Activated T-helper 1 cell treated with anti-CD3 and anti-CD28 coated beads, Interleukin-12 subunit alpha, Interleukin-12 subunit beta, Interleukin-2, Interleukin-4 antibody, amounts not matched to agents 30 ng/mL and 10 ng/mL and 1 ng/mL, durations not matched to agents 14 hours and 24 hours and 36 hours (primary cell): ENCODE measurements at regions of chr1 and their contacts with region 1.

Region 1: GRCh38 chr1:27891196-27891889 is 19.0 kb downstream of the THEMIS2 start:
- DNase-seq: peak; percentile 62
- H3K4me3 Mint-ChIP-seq: peak overlapping the region; percentile 63
- H3K27ac Mint-ChIP-seq: peak overlapping the region; percentile 95
- H3K4me1 Mint-ChIP-seq: peaks cover 66% of the 10 kb centered on the region
- H3K27me3 Mint-ChIP-seq: no peaks in the 10 kb centered on the region

Region 2: GRCh38 chr1:27671964-27672749 is 219.2 kb before region 1 on chr1 and contains the start of gene IFI6:
- intact Hi-C with region 1: loop called (anchors 1 kb)
- DNase-seq: peak; percentile 84
- H3K4me3 Mint-ChIP-seq: peak within 1 kb of the TSS; percentile 94
- H3K27ac Mint-ChIP-seq: peak within 1 kb of the TSS; percentile 90
- H3K4me1 Mint-ChIP-seq: peaks cover 40% of the 10 kb centered on the region
- H3K27me3 Mint-ChIP-seq: no peaks in the 10 kb centered on the region
- total RNA-seq, gene IFI6: 71.7 and 85.6 TPM in 2 replicates

Region 3: DNA sequence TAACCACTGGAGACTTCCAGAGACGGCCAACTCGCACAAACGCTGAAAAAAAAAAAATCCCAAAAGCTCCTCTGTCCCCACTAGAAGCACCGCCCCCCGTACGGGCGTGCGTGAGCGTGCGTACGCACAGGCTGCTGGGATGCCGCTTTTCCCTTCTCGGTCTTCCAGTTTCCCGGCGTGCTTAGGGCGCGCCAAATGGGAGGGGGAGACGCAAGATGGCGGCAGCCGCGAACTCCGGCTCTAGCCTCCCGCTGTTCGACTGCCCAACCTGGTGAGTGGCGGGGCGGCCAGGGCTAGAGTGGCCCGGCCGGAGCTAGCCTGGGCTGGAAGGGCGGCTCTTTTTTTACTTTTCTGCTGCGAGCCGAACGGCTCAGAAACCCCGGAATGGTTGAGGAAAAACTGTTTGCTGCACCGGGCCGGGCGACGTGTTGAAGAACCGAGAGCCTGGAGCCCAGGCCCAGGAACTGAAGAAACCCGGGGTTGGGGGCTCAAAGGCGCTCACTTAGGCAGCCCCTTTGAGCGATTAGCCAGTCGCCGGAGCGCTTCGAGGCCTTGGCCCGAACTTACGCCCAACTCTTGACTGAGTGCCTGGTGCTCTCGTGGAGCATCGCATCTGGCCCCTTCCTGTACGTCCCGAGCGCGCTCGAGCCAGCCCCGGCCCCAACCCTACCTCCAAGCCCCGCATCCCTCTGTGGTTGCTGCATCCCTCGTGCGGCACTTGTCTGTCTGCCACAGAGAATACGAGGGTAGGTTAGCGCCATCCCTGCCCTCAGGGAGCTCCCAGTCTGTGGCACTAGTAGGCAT is 60.5 kb before region 1 on chr1 and contains the start of gene PPP1R8:
- intact Hi-C with region 1: loop called (anchors 2 kb)
- DNase-seq: peak; percentile 86
- H3K4me3 Mint-ChIP-seq: peak within 1 kb of the TSS; percentile 93
- H3K27ac Mint-ChIP-seq: peak within 1 kb of the TSS; percentile 84
- H3K4me1 Mint-ChIP-seq: peaks cover 17% of the 10 kb centered on the region
- H3K27me3 Mint-ChIP-seq: no peaks in the 10 kb centered on the region
- total RNA-seq, gene PPP1R8: 84.1 and 88.1 TPM in 2 replicates

Region 4: DNA sequence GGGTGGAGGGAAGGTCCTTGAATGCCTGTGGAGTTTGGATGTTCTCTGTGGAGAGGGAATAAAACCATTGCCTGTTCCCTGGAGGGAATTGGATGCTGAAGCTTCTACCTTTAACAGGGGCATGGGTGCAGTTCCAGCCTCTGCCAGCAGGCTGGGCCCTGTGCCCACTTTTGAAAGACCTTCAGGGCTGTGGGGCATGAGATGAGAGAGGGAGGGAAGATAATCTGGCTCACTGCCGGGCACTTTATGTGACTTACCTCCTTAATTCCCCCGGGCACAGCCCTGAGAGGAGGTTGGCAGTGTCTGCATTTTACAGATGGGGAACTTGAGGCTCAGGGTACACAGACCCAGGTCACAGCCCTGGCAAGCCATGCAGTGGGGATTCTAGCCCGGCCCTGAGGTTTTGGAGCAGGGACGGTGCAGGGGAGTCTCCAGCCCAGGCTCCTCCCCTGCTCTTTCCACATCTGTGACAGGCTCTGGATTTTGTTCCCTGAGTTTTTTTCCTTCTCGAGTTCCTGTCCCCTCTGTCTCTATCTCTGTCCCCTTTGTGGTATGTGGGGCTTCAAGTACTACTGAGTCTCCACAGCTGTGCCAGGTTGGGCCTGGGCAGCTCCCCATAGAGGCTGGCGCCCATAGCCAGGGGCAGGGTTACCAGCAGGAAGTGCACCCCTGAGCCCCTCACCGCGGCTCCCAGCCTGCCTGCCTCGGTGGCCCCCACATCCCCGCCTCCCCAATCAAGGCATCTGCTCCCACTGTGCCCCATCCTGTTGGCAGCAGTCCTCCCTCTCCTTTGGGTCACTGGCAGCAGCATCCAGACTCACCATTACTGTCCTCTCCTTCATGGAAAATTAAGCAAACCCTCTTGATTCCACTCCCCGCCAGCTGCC is 33.0 kb before region 1 on chr1:
- intact Hi-C with region 1: loop called (anchors 1 kb)
- DNase-seq: peak; percentile 72
- H3K4me3 Mint-ChIP-seq: no peak overlapping the region
- H3K27ac Mint-ChIP-seq: no peak overlapping the region
- H3K4me1 Mint-ChIP-seq: peaks cover 27% of the 10 kb centered on the region
- H3K27me3 Mint-ChIP-seq: no peaks in the 10 kb centered on the region

Region 5: DNA sequence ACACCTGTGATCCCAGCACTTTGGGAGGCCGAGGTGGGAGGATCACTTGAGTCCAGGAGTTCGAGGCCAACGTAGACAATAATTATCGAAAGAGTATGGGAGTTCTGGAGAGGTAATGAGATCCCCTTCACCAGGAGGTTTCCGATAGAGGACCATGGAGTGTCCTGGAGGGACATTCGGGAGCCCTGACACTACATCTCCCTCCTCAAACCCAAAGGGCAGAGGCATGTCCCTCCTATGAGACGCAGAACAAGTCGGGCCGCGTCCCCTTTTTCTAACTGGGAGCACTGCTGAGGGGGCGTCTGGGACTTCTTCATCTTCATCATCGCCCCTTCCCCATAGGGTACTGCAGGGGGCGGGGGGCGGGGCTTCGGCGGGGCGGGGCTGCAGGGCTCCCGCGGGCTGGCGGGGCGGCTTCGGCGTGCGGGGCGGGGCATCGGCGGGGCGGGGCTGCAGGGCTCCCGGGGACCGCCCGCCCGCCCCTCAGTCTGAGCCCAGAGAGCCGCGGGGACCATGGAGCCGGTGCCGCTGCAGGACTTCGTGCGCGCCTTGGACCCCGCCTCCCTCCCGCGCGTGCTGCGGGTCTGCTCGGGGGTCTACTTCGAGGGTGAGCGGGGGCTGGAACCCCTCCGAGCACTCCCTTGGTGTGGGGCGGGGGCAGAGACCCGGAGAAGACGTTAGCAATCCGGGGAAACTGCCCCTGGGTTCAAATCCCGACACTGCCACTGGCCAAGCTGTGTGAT is 19.1 kb before region 1 on chr1 and contains the start of gene THEMIS2:
- intact Hi-C with region 1: loop called (anchors 1 kb)
- DNase-seq: peak; percentile 70
- H3K4me3 Mint-ChIP-seq: peak within 1 kb of the TSS; percentile 94
- H3K27ac Mint-ChIP-seq: peak within 1 kb of the TSS; percentile 95
- H3K4me1 Mint-ChIP-seq: peaks cover 50% of the 10 kb centered on the region
- H3K27me3 Mint-ChIP-seq: no peaks in the 10 kb centered on the region
- total RNA-seq, gene THEMIS2: 28.7 and 33.5 TPM in 2 replicates

Region 6: GRCh38 chr1:27979151-27979858 is 88.0 kb after region 1 on chr1:
- intact Hi-C with region 1: loop called (anchors 1 kb)
- DNase-seq: no peak
- H3K4me3 Mint-ChIP-seq: no peak overlapping the region
- H3K27ac Mint-ChIP-seq: no peak overlapping the region
- H3K4me1 Mint-ChIP-seq: no peaks in the 10 kb centered on the region
- H3K27me3 Mint-ChIP-seq: no peaks in the 10 kb centered on the region

Region 7: GRCh38 chr1:28021064-28021463 is 129.7 kb after region 1 on chr1:
- intact Hi-C with region 1: no loop called
- DNase-seq: no peak
- H3K4me3 Mint-ChIP-seq: no peak overlapping the region
- H3K27ac Mint-ChIP-seq: no peak overlapping the region
- H3K4me1 Mint-ChIP-seq: peaks cover 6% of the 10 kb centered on the region
- H3K27me3 Mint-ChIP-seq: no peaks in the 10 kb centered on the region